ENCODE measurements at regions of chr2 and their contacts with region 1.

Region 1: DNA sequence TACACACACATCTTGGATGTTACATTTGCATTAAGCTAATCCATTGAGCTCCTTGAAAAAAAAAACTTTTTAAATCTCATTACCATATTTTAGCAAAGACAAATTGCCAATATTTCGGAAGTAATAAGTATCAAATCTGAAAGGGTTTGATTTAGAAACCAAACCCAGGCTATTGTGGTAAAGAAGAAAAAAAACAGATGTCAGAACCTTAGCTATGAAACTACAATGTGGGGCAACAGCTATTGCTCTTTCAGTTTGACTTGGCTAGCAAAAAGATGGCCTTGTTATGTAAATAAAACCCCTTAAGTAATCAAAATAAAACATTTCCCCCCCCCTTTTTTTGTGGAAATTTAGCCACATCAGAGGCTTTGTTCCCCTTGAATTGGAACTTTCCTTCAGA is 41.2 kb upstream of the REG3A start:
- DNase-seq: no peak
- ATAC-seq: no peak
- H3K4me3 ChIP-seq: no peak overlapping the region
- H3K4me3 Mint-ChIP-seq: no peak overlapping the region
- H3K27ac ChIP-seq: no peak overlapping the region
- H3K27ac Mint-ChIP-seq: no peak overlapping the region
- H3K4me1 ChIP-seq: no peaks in the 10 kb centered on the region
- H3K4me1 Mint-ChIP-seq: no peaks in the 10 kb centered on the region
- H3K27me3 ChIP-seq: no peaks in the 10 kb centered on the region
- H3K27me3 Mint-ChIP-seq: no peaks in the 10 kb centered on the region

Region 2: DNA sequence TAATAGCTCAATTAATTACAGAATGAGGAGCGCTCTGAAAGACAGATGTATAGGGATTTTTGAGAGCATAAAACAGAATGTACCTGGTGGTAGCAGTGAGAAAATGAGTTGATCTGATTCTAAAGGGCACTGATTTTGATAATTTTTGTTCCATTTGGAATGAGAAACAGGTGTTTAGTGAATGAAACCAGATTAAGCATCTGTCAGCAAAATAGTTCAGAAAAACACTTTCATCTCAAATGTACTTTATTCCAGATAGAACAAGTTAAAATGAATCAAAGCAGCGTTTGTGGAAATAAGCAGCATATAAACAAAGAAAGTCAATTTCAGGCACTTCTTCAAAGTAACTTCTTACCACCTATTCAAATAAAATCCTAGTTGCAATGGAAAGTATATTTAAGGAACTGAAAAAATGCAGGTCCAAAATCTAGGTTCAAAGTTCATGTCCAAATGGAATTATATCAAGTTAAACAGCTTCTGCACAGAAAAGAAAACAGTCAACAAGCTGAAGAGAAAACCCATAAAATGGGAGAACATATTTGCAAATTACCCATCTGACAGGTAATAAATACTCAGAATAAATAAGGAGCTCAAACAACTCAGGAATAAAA is 29.3 kb before region 1 on chr2:
- CTCF ChIA-PET with region 1: no interaction called
- POLR2A ChIA-PET with region 1: no interaction called
- DNase-seq: no peak
- ATAC-seq: no peak
- H3K4me3 ChIP-seq: no peak overlapping the region
- H3K4me3 Mint-ChIP-seq: no peak overlapping the region
- H3K27ac ChIP-seq: no peak overlapping the region
- H3K27ac Mint-ChIP-seq: no peak overlapping the region
- H3K4me1 ChIP-seq: no peaks in the 10 kb centered on the region
- H3K4me1 Mint-ChIP-seq: no peaks in the 10 kb centered on the region
- H3K27me3 ChIP-seq: no peaks in the 10 kb centered on the region
- H3K27me3 Mint-ChIP-seq: no peaks in the 10 kb centered on the region

Region 3: GRCh38 chr2:79235135-79235534 is 34.4 kb after region 1 on chr2:
- CTCF ChIA-PET with region 1: no interaction called
- POLR2A ChIA-PET with region 1: interaction called in 1 of 2 experiments, 11 read pairs
- DNase-seq: no peak
- ATAC-seq: no peak
- H3K4me3 ChIP-seq: no peak overlapping the region
- H3K4me3 Mint-ChIP-seq: no peak overlapping the region
- H3K27ac ChIP-seq: no peak overlapping the region
- H3K27ac Mint-ChIP-seq: no peak overlapping the region
- H3K4me1 ChIP-seq: no peaks in the 10 kb centered on the region
- H3K4me1 Mint-ChIP-seq: no peaks in the 10 kb centered on the region
- H3K27me3 ChIP-seq: no peaks in the 10 kb centered on the region
- H3K27me3 Mint-ChIP-seq: no peaks in the 10 kb centered on the region

Region 4: GRCh38 chr2:79259296-79259695 is 58.5 kb after region 1 on chr2:
- CTCF ChIA-PET with region 1: no interaction called
- POLR2A ChIA-PET with region 1: no interaction called
- DNase-seq: no peak
- ATAC-seq: no peak
- H3K4me3 ChIP-seq: no peak overlapping the region
- H3K4me3 Mint-ChIP-seq: no peak overlapping the region
- H3K27ac ChIP-seq: no peak overlapping the region
- H3K27ac Mint-ChIP-seq: no peak overlapping the region
- H3K4me1 ChIP-seq: no peaks in the 10 kb centered on the region
- H3K4me1 Mint-ChIP-seq: no peaks in the 10 kb centered on the region
- H3K27me3 ChIP-seq: no peaks in the 10 kb centered on the region
- H3K27me3 Mint-ChIP-seq: no peaks in the 10 kb centered on the region

Measured in T-cell (primary cell).